ENCODE measurements at regions of chr5 and their contacts with region 1.

Region 1: DNA sequence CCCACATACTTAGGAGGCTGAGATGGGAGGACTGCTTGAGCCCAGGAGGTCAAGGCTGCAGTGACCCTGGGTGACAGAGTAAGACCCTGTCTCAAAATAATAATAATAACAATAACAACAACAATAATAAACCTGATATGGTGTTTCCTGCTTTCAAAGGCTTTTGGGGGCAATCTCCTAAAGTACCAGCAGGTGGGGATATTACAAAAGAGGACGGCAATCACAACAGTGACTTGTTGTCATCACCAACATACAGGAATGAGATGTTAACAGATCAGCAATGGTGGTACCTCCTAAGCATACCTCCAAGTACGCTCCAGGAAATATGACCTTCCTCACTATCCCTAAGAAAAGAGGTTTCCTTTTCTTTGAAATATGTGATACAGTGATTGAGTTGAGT is 91.1 kb upstream of the RNF180 start:
- DNase-seq: peak in 2 of 4 donors; percentile 27 to 37
- ATAC-seq: peak; percentile 42
- H3K4me3 ChIP-seq: no peak overlapping the region
- H3K27ac ChIP-seq: no peak overlapping the region
- H3K4me1 ChIP-seq: no peaks in the 10 kb centered on the region
- H3K27me3 ChIP-seq: no peaks in the 10 kb centered on the region
- CTCF ChIP-seq: peak; percentile 21 to 29

Region 2: DNA sequence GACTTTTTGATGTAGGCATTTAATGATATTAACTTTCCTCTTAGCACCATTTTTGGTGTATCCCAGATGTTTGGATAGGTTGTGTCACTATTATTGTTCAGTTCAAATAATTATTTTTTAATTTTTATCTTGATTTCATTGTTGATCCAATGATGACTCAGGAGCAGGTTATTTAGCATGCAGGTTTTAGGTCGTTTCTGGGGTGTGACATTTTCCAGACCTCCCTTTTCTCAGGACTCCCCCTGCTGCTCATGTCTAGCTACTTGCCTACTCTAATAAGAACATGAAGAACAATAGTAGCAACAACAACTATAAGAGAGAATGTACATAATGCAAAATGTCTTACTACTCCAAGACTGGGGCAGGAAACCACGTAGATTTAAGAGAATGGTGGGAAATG is 645.8 kb before region 1 on chr5:
- intact Hi-C with region 1: no loop called
- DNase-seq: no peak
- ATAC-seq: no peak
- H3K4me3 ChIP-seq: no peak overlapping the region
- H3K27ac ChIP-seq: no peak overlapping the region
- H3K4me1 ChIP-seq: no peaks in the 10 kb centered on the region
- H3K27me3 ChIP-seq: no peaks in the 10 kb centered on the region
- CTCF ChIP-seq: no peak

Region 3: GRCh38 chr5:64207978-64208377 is 133.4 kb after region 1 on chr5:
- intact Hi-C with region 1: loop called in 1 of 2 experiments (anchors 10 kb)
- DNase-seq: peak in 2 of 4 donors; percentile 25 to 26
- ATAC-seq: no peak
- H3K4me3 ChIP-seq: no peak overlapping the region
- H3K27ac ChIP-seq: no peak overlapping the region
- H3K4me1 ChIP-seq: no peaks in the 10 kb centered on the region
- H3K27me3 ChIP-seq: no peaks in the 10 kb centered on the region
- CTCF ChIP-seq: peak in 1 of 2 donors; percentile 22

Region 4: DNA sequence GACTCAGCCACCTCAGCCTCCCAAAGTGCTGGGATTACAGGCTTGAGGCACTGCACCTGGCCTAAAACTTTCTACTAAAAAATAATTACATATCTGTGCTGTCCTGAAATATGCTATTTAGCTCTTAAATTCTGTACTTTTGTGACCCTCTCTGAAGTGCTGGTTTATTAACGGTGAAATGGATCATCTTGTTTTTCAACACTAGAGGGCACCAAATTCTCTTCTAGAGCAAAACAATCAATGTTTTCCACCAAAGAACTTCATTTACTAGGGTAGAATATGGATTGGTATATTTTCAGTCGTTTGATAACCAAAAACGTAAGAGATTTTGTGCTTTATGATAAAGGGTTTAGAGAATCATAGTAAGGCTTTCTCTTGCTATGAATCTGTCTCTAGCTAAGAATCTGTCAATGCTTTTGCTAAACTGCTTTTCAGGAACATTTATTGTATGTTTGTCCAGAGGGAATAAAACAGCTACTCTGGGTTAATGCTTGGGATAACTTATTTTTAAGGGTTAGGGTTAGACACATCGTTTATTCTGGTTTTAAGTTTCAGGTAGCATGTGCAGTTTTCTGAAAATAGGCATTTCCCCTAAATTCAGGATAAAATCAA is 154.7 kb after region 1 on chr5:
- intact Hi-C with region 1: no loop called
- DNase-seq: peak in 2 of 4 donors; percentile 27 to 37
- ATAC-seq: peak; percentile 40
- H3K4me3 ChIP-seq: no peak overlapping the region
- H3K27ac ChIP-seq: no peak overlapping the region
- H3K4me1 ChIP-seq: no peaks in the 10 kb centered on the region
- H3K27me3 ChIP-seq: no peaks in the 10 kb centered on the region
- CTCF ChIP-seq: peak in 1 of 2 donors; percentile 53

Measured in left lung (tissue), 14 donors.